ENCODE measurements at regions of chr5 and their contacts with region 1.

Region 1: GRCh38 chr5:141878711-141879425 is 658 bp upstream of the PCDH1 start:
- DNase-seq: peak; percentile 81
- H3K4me3 Mint-ChIP-seq: peak overlapping the region; percentile 76
- H3K27ac Mint-ChIP-seq: peak overlapping the region; percentile 37
- H3K4me1 Mint-ChIP-seq: peaks cover 25% of the 10 kb centered on the region
- H3K27me3 Mint-ChIP-seq: peaks cover 80% of the 10 kb centered on the region

Region 2: GRCh38 chr5:141664732-141665461 is 214.0 kb before region 1 on chr5:
- intact Hi-C with region 1: loop called (anchors 1 kb)
- DNase-seq: peak; percentile 59
- H3K4me3 Mint-ChIP-seq: no peak overlapping the region
- H3K27ac Mint-ChIP-seq: no peak overlapping the region
- H3K4me1 Mint-ChIP-seq: no peaks in the 10 kb centered on the region
- H3K27me3 Mint-ChIP-seq: peaks cover 2% of the 10 kb centered on the region

Region 3: GRCh38 chr5:141757402-141757801 is 121.5 kb before region 1 on chr5:
- intact Hi-C with region 1: loop called (anchors 5 kb)
- DNase-seq: no peak
- H3K4me3 Mint-ChIP-seq: no peak overlapping the region
- H3K27ac Mint-ChIP-seq: no peak overlapping the region
- H3K4me1 Mint-ChIP-seq: no peaks in the 10 kb centered on the region
- H3K27me3 Mint-ChIP-seq: peaks cover 41% of the 10 kb centered on the region

Region 4: DNA sequence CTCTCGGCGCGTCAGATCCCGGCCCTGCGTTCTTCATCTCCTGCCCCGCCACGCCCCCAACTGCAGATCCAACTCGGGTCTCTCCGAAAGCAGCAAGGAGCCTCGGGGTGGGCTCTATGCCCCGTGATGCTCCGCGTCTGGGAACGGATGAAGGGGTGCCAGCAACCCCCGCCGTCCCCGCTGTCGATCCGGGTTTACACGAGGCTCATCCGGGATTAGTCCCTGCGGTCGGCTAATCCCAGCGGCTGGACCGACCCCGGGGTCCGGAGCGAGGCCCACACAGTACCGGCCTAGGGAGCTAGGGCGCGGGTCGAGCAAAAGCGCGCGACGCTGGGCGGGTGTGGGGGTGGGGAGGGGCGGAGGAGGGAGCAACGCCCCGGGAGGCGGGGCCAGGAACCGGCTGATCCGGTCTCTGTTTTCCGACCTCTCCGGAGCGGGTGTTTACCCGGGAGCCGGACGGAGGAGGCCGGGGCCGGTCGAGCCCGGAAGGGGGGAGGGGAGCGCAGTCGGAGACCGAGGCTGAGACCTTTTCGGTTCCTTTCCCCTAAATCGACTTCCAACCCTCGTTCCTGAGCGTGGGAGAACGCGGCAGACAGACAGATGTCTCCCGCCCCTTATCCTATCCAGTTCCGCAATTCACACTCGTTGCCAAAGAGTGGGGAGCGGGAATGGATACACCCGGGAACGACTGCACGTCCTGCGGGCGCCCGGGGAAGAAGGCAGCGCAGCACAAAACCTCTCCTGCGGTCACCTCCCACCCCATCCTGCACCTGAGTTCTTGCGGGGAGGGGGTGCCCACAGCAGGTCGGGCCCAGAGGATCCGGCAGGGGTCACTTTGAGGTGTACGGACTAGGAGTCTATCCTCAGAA is 29.3 kb before region 1 on chr5:
- intact Hi-C with region 1: loop called (anchors 1 kb)
- DNase-seq: peak; percentile 69
- H3K4me3 Mint-ChIP-seq: peak overlapping the region; percentile 86
- H3K27ac Mint-ChIP-seq: peak overlapping the region; percentile 86
- H3K4me1 Mint-ChIP-seq: peaks cover 20% of the 10 kb centered on the region
- H3K27me3 Mint-ChIP-seq: peaks cover 7% of the 10 kb centered on the region

Region 5: DNA sequence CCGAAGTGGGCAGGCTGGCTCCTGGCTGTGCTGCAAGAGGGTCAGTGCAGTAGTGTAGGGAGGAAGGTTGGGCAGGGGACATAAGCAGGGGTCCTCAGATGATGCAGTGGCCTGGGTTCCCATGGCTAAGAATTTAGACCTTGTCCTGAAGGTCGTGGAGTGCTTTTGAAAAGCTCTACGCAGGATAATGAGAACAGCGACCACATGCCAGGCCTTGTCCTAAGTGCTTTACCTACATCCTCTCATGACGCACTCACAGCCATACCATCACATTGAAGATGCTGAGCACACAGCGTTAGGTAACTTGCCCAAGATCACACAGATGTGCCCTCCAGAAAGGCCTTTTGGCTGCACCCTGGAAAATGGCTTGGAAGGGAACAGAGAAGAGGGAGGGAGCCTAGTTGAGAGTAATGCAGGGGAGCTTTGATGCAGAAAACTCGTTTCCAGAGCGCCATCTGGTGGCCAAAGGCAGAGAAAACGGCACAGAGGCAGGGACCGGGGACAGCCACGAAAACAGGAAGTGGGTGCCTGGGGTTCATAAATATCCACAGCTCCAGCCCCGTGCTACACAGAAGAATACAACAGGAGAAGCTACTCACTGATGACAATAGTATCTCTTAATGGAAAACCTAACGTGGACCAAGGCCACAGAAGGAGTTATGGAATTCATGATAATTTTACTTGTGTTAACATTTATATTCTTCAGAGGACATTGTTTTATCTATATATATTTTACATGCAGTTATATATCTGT is 81.8 kb after region 1 on chr5:
- intact Hi-C with region 1: loop called (anchors 1 kb)
- DNase-seq: peak; percentile 82
- H3K4me3 Mint-ChIP-seq: peak overlapping the region; percentile 24
- H3K27ac Mint-ChIP-seq: peak overlapping the region; percentile 76
- H3K4me1 Mint-ChIP-seq: peaks cover 42% of the 10 kb centered on the region
- H3K27me3 Mint-ChIP-seq: no peaks in the 10 kb centered on the region

Measured in activated T-helper 1 cell treated with anti-CD3 and anti-CD28 coated beads, Interleukin-12 subunit alpha, Interleukin-12 subunit beta, Interleukin-2, Interleukin-4 antibody, amounts not matched to agents 30 ng/mL and 10 ng/mL and 1 ng/mL, durations not matched to agents 14 hours and 24 hours and 36 hours (primary cell).